ENCODE measurements at regions of chr11 and their contacts with region 1.

Region 1: DNA sequence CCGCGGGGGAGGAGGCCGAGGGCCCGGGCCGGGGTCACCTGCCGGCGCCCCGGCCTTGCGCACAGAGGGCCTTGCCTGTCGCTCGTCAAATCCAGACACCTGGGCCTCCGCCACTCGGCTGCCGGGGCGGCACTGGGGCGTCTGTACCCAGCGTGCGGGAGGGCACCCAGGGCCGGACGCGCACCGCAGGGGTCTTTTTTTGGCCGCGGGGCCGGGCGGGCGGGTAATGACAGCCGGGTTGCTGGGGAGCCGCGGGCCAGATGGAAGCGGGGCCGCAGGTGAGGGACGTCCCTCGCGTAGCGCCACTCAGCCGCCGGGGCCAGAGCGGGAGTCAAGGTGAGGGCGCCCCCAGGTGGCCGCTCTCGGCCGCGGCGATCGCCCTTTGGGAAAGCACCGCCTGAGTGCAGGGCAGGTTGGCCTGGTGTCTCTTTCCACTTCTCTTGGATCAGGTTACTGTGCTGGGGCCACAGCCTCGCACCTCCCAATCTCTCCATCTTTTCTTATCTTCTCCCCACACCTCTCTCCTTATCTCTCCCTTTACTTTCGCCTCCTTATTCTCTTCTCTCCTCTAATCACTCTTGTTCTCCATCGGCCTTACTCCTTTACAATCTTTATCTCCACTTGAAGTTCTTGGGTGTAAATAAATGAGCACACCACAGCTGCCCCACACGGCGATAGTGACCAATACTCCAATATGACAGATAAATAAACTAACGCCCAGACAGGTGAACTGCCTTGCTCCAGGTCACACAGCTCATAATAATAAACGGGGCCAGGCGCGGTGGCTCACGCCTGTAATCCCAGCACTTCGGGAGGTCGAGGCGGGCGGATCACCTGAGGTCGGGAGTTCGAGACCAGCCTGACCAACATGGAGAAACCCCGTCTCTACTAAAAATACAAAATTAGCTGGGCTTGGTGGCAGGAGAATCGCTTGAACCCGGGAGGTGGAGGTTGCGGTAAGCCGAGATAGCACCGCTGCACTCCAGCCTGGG is 3.7 kb downstream of the PHLDB1 start:
- DNase-seq: peak; percentile 83
- ATAC-seq: peak; percentile 59
- H3K4me3 Mint-ChIP-seq: peak overlapping the region; percentile 79
- H3K27ac Mint-ChIP-seq: no peak overlapping the region
- H3K4me1 Mint-ChIP-seq: peaks cover 26% of the 10 kb centered on the region
- H3K27me3 Mint-ChIP-seq: peaks cover 35% of the 10 kb centered on the region
- CTCF ChIP-seq: peak; percentile 46

Region 2: DNA sequence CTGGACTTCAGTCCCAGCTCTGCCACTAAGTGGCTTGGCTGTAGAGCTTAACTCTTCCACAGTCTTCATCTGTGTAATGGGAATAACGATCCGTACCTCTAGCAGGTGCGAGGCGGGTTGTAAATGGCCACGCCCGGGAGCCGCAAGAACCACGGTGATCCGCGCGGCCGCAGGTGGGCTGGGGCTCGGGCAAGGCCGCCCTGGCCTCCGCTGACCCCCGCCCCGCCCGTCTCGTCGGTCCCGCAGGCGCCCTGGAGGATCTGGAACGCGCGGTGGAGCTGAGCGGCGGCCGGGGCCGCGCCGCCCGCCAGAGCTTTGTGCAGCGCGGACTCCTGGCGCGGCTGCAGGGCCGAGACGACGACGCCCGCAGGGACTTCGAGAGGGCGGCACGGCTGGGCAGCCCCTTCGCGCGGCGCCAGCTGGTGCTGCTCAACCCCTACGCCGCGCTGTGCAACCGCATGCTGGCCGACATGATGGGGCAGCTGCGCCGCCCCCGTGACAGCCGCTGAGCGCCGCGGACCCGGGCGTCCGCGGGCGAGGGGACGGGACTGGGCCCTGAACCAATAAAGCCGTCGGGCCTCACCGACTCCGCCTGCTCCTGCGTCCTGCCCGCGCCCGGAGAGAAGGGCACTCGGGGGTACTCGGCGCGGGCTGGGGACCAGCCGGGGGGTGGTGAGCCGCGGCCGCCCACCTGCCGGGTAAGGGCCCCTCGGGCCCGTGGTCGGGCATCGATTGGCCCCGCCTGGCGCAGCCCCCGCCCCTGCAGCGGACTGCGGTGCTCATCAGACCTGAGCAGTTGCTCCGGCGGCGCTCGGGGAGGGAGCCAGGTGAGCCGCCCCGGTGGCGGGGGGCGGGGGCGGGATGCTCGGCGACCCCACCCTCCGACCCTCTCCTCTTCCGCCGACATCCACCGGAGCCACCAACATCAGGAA is 80.4 kb before region 1 on chr11 and contains the start of gene TMEM25:
- CTCF ChIA-PET with region 1: no interaction called
- POLR2A ChIA-PET with region 1: no interaction called
- intact Hi-C with region 1: no loop called
- DNase-seq: peak; percentile 71
- ATAC-seq: peak; percentile 90
- H3K4me3 Mint-ChIP-seq: peak within 1 kb of the TSS; percentile 89
- H3K27ac Mint-ChIP-seq: peak within 1 kb of the TSS; percentile 35
- H3K4me1 Mint-ChIP-seq: peaks cover 18% of the 10 kb centered on the region
- H3K27me3 Mint-ChIP-seq: no peaks in the 10 kb centered on the region
- CTCF ChIP-seq: no peak
- total RNA-seq, gene TMEM25: 9.4 and 12.5 TPM in 2 replicates

Region 3: GRCh38 chr11:118572061-118572980 is 38.8 kb before region 1 on chr11 and contains the start of gene ARCN1:
- CTCF ChIA-PET with region 1: interaction called, 3 read pairs
- POLR2A ChIA-PET with region 1: interaction called, 8 read pairs
- intact Hi-C with region 1: loop called (anchors 1 kb)
- DNase-seq: peak; percentile 67
- ATAC-seq: peak; percentile 88
- H3K4me3 Mint-ChIP-seq: peak within 1 kb of the TSS; percentile 93
- H3K27ac Mint-ChIP-seq: peak within 1 kb of the TSS; percentile 86
- H3K4me1 Mint-ChIP-seq: peaks cover 45% of the 10 kb centered on the region
- H3K27me3 Mint-ChIP-seq: no peaks in the 10 kb centered on the region
- CTCF ChIP-seq: no peak
- total RNA-seq, gene ARCN1: 91.3 and 94.7 TPM in 2 replicates

Region 4: DNA sequence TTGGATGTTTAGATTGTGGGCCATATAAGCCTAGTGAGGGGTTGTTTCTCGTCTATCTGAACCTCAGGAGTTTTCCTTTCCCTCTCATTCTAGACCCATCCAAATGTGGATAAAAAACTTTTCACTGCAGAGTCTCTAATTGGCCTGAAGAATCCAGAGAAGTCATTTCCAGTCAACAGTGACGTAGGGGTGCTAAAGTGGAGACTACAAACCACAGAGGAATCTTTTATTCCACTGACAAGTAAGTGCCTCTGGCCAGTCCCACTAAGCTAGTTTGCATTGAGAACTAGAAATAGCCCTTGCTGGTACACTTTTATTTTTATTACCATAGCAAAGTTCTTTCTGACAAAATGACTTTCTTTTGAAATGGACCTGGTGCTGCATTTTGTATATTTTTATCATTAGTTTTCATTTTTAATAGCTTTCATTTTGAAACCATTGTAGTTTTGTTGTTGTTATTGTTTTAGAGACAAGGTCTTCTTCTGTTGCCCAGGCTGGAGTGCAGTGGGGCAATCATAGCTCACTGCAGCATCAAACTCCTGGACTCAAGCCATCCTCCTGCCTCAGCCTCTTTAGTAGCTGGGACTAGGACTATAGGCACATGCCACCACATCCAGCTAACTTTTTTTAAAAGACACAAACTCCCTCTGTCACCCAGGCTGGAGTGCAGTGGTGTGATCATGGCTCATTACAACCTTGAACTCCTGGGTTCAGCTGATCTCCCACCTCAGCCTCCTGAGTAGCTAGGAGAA is 18.3 kb before region 1 on chr11:
- CTCF ChIA-PET with region 1: interaction called, 12 read pairs
- POLR2A ChIA-PET with region 1: interaction called, 4 read pairs
- intact Hi-C with region 1: loop called (anchors 1 kb)
- DNase-seq: no peak
- ATAC-seq: no peak
- H3K4me3 Mint-ChIP-seq: no peak overlapping the region
- H3K27ac Mint-ChIP-seq: no peak overlapping the region
- H3K4me1 Mint-ChIP-seq: peaks cover 3% of the 10 kb centered on the region
- H3K27me3 Mint-ChIP-seq: no peaks in the 10 kb centered on the region
- CTCF ChIP-seq: no peak

Region 5: DNA sequence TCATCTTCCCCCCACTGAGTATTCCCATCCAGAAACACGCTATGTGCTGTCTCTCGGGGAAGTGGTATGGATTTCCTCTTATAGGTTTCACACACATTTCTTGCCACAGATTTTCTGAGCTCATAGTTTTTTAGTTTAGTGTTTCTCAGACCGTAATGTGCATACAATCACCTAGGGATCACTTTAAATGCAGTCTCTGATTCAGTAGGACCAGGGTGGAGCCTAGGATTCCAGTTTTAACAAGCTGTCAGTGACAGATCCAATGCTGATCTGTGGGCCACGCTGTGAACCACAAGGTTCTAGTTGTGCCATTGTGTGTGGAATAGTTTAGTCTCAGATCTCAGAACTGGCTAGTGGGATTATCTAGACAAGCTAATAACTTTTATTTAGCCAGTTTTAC is 248.9 kb after region 1 on chr11:
- CTCF ChIA-PET with region 1: no interaction called
- POLR2A ChIA-PET with region 1: no interaction called
- intact Hi-C with region 1: no loop called
- DNase-seq: no peak
- ATAC-seq: no peak
- H3K4me3 Mint-ChIP-seq: no peak overlapping the region
- H3K27ac Mint-ChIP-seq: peak overlapping the region; percentile 4
- H3K4me1 Mint-ChIP-seq: peaks cover 37% of the 10 kb centered on the region
- H3K27me3 Mint-ChIP-seq: no peaks in the 10 kb centered on the region
- CTCF ChIP-seq: no peak